IMR-90 (cell line): ENCODE measurements at regions of chr15 and their contacts with region 1.

Region 1: DNA sequence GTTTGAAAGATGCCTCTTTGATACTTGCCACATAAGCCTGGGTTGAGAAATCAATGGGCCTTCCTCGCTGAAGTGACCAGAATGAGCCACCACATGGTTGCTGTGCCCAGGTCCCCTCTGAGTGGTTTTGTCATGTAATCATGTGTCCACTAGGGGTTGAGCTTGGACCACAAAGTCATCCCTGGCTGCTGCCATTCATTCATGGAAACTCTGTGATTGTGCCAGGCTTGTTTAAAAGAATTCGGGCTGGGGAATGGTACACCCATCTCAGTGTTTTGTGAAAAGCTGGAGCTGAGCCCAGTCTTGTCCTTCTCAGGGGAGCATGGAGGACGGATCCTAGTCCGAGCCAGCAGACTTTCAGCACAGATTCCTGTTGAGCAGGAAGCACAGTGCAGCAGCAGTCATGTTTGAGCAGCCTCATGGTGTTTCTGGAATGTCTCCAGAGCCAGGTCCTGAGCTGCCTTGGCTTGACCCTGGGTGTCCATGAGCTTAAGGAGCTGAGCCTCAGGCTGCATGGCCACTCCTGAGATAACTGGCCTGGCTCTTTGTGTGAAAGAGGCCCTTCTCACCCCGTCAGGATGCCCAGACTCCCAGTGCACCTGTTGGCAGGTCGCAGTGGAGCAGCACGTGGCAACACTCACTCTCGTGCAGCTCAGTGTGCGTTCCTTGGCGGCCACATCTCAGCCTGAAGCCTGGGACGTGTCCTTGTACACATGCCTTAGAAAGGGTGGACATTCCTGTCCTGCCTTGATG is 260.3 kb upstream of the TPM1 start:
- DNase-seq: peak; percentile 85
- ATAC-seq: peak; percentile 81
- H3K4me3 ChIP-seq: no peak overlapping the region
- H3K27ac ChIP-seq: peak overlapping the region; percentile 0; the same call in 1 of the 2 replicates
- H3K4me1 ChIP-seq: peaks cover 20% of the 10 kb centered on the region
- H3K27me3 ChIP-seq: no peaks in the 10 kb centered on the region
- CTCF ChIP-seq: peak; percentile 84
- POLR2A ChIP-seq: 0 out of 2 replicates have a peak, but pooled peaks have one; percentile 37
- RAD21 ChIP-seq: peak; percentile 96

Region 2: DNA sequence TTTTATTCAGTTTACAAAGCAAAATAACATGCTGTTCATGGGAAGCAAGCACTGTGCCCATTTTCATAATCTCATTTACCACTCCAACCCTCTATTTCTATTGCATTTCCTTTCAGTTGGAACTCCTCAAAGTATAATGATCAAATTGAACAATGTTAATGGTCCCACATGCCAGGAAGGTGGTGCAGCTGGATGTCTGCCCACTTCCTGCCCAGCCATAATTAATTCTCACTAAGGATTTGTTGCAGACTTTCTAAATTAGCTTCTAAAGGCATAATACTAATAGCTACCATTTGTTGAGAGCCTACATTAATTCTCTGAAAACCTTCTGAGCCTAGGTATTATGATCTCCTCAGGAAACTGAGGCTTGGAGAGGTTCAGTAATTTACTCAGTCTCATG is 55.8 kb before region 1 on chr15:
- CTCF ChIA-PET with region 1: no interaction called
- POLR2A ChIA-PET with region 1: no interaction called
- dilution Hi-C with region 1: no loop called
- in situ Hi-C with region 1: no loop called
- intact Hi-C with region 1: no loop called
- DNase-seq: no peak
- ATAC-seq: no peak
- H3K4me3 ChIP-seq: no peak overlapping the region
- H3K27ac ChIP-seq: no peak overlapping the region
- H3K4me1 ChIP-seq: no peaks in the 10 kb centered on the region
- H3K27me3 ChIP-seq: no peaks in the 10 kb centered on the region
- CTCF ChIP-seq: no peak
- POLR2A ChIP-seq: no peak
- RAD21 ChIP-seq: no peak

Region 3: GRCh38 chr15:62835351-62835750 is 53.1 kb after region 1 on chr15:
- CTCF ChIA-PET with region 1: no interaction called
- POLR2A ChIA-PET with region 1: no interaction called
- dilution Hi-C with region 1: no loop called
- in situ Hi-C with region 1: no loop called
- intact Hi-C with region 1: no loop called
- DNase-seq: no peak
- ATAC-seq: no peak
- H3K4me3 ChIP-seq: no peak overlapping the region
- H3K27ac ChIP-seq: no peak overlapping the region
- H3K4me1 ChIP-seq: no peaks in the 10 kb centered on the region
- H3K27me3 ChIP-seq: no peaks in the 10 kb centered on the region
- CTCF ChIP-seq: no peak
- POLR2A ChIP-seq: no peak
- RAD21 ChIP-seq: no peak

Region 4: GRCh38 chr15:62896978-62897647 is 114.9 kb after region 1 on chr15:
- CTCF ChIA-PET with region 1: interaction called, 4 read pairs
- POLR2A ChIA-PET with region 1: interaction called, 3 read pairs
- dilution Hi-C with region 1: no loop called
- in situ Hi-C with region 1: no loop called
- intact Hi-C with region 1: loop called (anchors 10 kb)
- DNase-seq: peak; percentile 99
- ATAC-seq: peak; percentile 86
- H3K4me3 ChIP-seq: peak overlapping the region; percentile 18; the same call in 1 of the 2 replicates
- H3K27ac ChIP-seq: peak overlapping the region; percentile 78
- H3K4me1 ChIP-seq: peaks cover 25% of the 10 kb centered on the region
- H3K27me3 ChIP-seq: no peaks in the 10 kb centered on the region
- CTCF ChIP-seq: no peak
- POLR2A ChIP-seq: no peak
- RAD21 ChIP-seq: peak; percentile 32; the same call in 1 of the 2 replicates

Region 5: GRCh38 chr15:62928242-62928995 is 146.2 kb after region 1 on chr15:
- CTCF ChIA-PET with region 1: interaction called, 3 read pairs
- POLR2A ChIA-PET with region 1: no interaction called
- dilution Hi-C with region 1: no loop called
- in situ Hi-C with region 1: no loop called
- intact Hi-C with region 1: loop called (anchors 5 kb)
- DNase-seq: peak; percentile 92
- ATAC-seq: peak; percentile 64
- H3K4me3 ChIP-seq: no peak overlapping the region
- H3K27ac ChIP-seq: peak overlapping the region; percentile 58
- H3K4me1 ChIP-seq: peaks cover 19% of the 10 kb centered on the region
- H3K27me3 ChIP-seq: no peaks in the 10 kb centered on the region
- CTCF ChIP-seq: peak; percentile 56
- POLR2A ChIP-seq: no peak
- RAD21 ChIP-seq: peak; percentile 74

Region 6: GRCh38 chr15:63041974-63042819 is 260.0 kb after region 1 on chr15 and contains the start of gene TPM1:
- CTCF ChIA-PET with region 1: interaction called, 3 read pairs
- POLR2A ChIA-PET with region 1: interaction called, 5 read pairs
- dilution Hi-C with region 1: no loop called
- in situ Hi-C with region 1: loop called (anchors 5 kb)
- intact Hi-C with region 1: loop called (anchors 1 kb)
- DNase-seq: peak; percentile 93
- ATAC-seq: peak; percentile 85
- H3K4me3 ChIP-seq: peak within 1 kb of the TSS; percentile 84
- H3K27ac ChIP-seq: peak within 1 kb of the TSS; percentile 87
- H3K4me1 ChIP-seq: peaks cover 9% of the 10 kb centered on the region
- H3K27me3 ChIP-seq: no peaks in the 10 kb centered on the region
- CTCF ChIP-seq: peak; percentile 30; the same call in 1 of the 2 replicates
- POLR2A ChIP-seq: peak; percentile 97
- RAD21 ChIP-seq: peak; percentile 43
- total RNA-seq, gene TPM1: 661 and 997 TPM in 2 replicates

Region 7: GRCh38 chr15:63048115-63048775 is 266.0 kb after region 1 on chr15:
- CTCF ChIA-PET with region 1: interaction called, 3 read pairs
- POLR2A ChIA-PET with region 1: interaction called, 5 read pairs
- dilution Hi-C with region 1: no loop called
- in situ Hi-C with region 1: loop called (anchors 5 kb)
- intact Hi-C with region 1: loop called (anchors 1 kb)
- DNase-seq: peak; percentile 92
- ATAC-seq: peak; percentile 60
- H3K4me3 ChIP-seq: peak overlapping the region; percentile 84
- H3K27ac ChIP-seq: peak overlapping the region; percentile 92
- H3K4me1 ChIP-seq: peaks cover 22% of the 10 kb centered on the region
- H3K27me3 ChIP-seq: no peaks in the 10 kb centered on the region
- CTCF ChIP-seq: peak; percentile 82
- POLR2A ChIP-seq: peak; percentile 79
- RAD21 ChIP-seq: peak; percentile 80

Region 8: GRCh38 chr15:63264688-63265302 is 482.6 kb after region 1 on chr15:
- CTCF ChIA-PET with region 1: no interaction called
- POLR2A ChIA-PET with region 1: no interaction called
- dilution Hi-C with region 1: no loop called
- in situ Hi-C with region 1: no loop called
- intact Hi-C with region 1: loop called (anchors 5 kb)
- DNase-seq: peak; percentile 83
- ATAC-seq: peak; percentile 71
- H3K4me3 ChIP-seq: no peak overlapping the region
- H3K27ac ChIP-seq: peak overlapping the region; percentile 7; the same call in 1 of the 2 replicates
- H3K4me1 ChIP-seq: no peaks in the 10 kb centered on the region; the same call in 1 of the 2 replicates
- H3K27me3 ChIP-seq: no peaks in the 10 kb centered on the region
- CTCF ChIP-seq: no peak
- POLR2A ChIP-seq: no peak
- RAD21 ChIP-seq: no peak